ENCODE measurements at regions of chr11 and their contacts with region 1.

Region 1: DNA sequence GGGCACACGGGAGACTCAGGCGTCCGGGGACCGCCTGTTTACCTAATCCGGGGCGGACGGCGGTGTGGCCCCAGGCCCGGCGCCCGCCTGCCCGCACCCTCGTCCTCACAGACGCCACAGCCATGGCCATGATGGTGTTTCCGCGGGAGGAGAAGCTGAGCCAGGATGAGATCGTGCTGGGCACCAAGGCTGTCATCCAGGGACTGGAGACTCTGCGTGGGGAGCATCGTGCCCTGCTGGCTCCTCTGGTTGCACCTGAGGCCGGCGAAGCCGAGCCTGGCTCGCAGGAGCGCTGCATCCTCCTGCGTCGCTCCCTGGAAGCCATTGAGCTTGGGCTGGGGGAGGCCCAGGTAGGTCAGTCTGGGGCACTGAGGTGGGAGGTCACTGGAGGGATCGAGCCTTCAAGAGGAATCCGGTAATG is 10.0 kb upstream of the RAB1B start:
- DNase-seq: no peak
- H3K4me3 ChIP-seq: peak overlapping the region; percentile 93
- H3K27ac ChIP-seq: peak overlapping the region; percentile 62 to 81
- H3K4me1 ChIP-seq: peaks cover 9% of the 10 kb centered on the region
- H3K27me3 ChIP-seq: no peaks in the 10 kb centered on the region
- CTCF ChIP-seq: no peak
- EP300 ChIP-seq: no peak
- POLR2A ChIP-seq: no peak

Region 2: DNA sequence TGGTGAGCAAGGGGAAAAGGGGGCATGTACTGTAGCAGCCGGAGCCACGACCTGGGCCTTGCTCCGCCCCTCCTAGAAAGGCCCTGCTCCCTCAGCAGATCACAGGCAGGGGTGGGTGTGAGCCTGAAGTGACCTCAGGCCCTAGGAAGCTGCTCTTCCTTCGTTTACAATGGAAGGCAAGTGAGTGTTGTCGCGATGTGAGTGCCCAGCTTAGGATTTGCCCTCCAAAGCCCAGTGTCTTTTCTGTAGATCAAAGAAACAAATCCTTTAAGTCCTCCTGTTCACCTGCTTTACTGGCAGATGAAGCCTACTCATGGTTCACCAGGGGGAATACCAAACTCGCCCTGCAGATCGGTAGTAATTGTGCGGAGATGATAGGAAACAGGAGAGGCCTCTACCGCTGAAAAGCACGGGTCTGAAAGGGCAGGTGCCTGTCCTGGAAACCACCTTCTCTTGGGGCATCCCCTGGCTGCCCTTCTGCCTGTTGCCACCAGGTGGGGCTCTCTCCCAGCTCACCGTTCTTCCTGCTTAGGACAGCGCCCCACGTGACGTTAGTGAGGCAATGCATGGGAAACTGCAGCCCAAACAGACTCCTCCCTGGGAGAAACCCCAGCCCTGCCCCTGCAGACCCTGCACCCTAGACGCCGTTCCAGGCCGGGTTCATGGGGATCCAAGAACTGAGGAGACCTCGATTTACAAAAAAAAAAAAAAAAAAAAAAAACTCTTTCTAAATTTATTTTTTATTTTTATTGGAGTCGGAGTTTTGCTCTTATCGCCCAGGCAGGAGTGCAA is 35.9 kb before region 1 on chr11:
- intact Hi-C with region 1: loop called in 1 of 4 experiments (anchors 2 kb)
- DNase-seq: peak; percentile 81 to 89 (median 87)
- H3K4me3 ChIP-seq: no peak overlapping the region
- H3K27ac ChIP-seq: no peak overlapping the region
- H3K4me1 ChIP-seq: no peaks in the 10 kb centered on the region
- H3K27me3 ChIP-seq: no peaks in the 10 kb centered on the region
- CTCF ChIP-seq: peak; percentile 88 to 99 (median 99)
- EP300 ChIP-seq: no peak
- POLR2A ChIP-seq: peak; percentile 17

Region 3: DNA sequence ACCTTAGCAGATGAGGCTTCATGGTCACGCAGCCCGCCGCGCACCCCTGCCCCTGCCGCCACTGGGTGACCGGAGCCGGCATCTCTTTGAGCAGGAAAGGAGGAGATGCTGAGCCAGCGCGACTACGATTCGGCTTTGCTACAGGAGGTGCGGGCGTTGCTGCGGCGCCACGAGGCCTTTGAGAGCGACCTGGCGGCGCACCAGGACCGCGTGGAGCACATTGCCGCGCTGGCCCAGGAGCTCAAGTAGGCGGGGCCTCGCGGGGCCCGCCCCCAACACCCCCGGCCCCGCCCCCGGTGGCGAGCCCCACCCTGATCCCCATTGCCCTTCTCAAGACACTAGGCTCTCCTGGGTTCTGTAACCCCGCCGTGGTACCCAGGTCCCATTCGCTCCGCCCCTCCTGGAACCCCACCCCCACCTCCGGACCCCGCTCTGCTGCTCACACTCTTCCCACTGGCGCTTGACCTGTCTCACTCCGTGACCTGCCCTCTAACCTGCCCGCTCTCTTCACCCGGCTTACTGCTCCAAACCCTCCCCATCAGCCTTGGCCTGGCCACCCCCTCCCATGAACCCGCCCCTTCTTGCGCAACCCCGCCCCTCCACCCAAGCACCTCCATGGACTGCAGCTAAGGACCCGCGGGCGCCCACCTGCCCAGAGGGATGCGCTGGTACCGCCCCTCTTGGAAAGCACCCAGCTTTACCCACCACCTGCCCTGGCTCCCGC is 300.8 kb after region 1 on chr11:
- intact Hi-C with region 1: no loop called
- DNase-seq: peak; percentile 60 to 80 (median 66)
- H3K4me3 ChIP-seq: no peak overlapping the region
- H3K27ac ChIP-seq: no peak overlapping the region
- H3K4me1 ChIP-seq: peaks cover 3% of the 10 kb centered on the region
- H3K27me3 ChIP-seq: no peaks in the 10 kb centered on the region
- CTCF ChIP-seq: no peak
- EP300 ChIP-seq: no peak
- POLR2A ChIP-seq: no peak